ENCODE measurements at regions of chr21 and their contacts with region 1.

Region 1: DNA sequence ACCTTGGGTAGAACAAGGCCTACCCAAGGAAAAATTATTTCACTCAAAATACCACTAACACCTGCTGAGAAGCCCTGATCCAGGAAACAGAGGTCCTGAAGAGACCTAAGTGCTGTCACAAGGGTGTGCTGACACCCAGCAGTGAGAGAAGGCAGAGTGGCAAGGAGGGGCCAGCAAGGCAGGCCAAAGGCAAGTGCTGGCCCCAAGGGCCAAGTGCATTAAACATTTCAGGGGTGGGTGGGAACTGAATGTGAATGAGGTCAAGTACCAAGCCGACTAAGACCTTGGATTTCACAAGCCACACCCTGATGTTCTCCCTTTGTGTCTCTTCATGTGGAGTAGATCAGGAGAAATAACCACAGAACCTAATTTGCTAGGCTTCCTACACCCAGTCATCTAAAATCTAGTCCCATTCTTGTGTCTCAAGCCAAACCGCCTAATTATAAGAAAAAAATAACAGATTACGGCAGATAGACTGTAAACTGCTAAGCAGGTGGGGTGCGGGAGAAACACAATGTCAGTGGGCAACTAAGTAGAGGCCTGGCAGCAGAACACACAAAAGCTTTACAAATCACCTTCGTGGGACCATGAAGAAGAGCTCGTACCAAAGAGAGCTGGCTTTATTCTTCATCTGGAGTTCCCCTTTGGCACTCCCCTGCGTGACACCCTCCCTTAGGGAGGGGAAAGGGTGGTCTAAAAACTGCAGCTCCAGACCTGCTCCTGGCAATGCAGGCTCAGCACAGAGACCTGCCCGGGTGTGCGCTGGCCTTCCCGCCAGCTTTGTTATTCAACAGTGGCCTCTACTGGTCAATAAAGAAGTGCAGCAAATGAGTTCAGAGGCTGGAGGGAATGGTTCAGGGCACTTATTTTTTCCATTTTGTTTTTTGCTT is 8.7 kb downstream of the UBE2G2 start:
- DNase-seq: peak; percentile 40 to 45
- ATAC-seq: peak; percentile 86 to 93 (median 90)
- H3K4me3 ChIP-seq: no peak overlapping the region
- H3K27ac ChIP-seq: no peak overlapping the region
- H3K4me1 ChIP-seq: peaks cover 5 to 22% (median 12%) of the 10 kb centered on the region in 9 donors
- H3K27me3 ChIP-seq: no peaks in the 10 kb centered on the region
- CTCF ChIP-seq: peak; percentile 66 to 91 (median 82)

Region 2: GRCh38 chr21:44510508-44511210 is 282.3 kb before region 1 on chr21:
- intact Hi-C with region 1: loop called in 6 of 10 experiments (anchors 5 to 10 kb)
- DNase-seq: peak; percentile 23 to 60
- ATAC-seq: peak; percentile 14 to 80 (median 65)
- H3K4me3 ChIP-seq: peak overlapping the region in 2 of 10 donors; percentile 10 to 23
- H3K27ac ChIP-seq: no peak overlapping the region
- H3K4me1 ChIP-seq: peaks cover 0 to 10% (median 6%) of the 10 kb centered on the region in 9 donors
- H3K27me3 ChIP-seq: peaks cover 0 to 47% (median 17%) of the 10 kb centered on the region in 7 donors
- CTCF ChIP-seq: peak; percentile 45 to 87 (median 74)

Region 3: GRCh38 chr21:44517175-44517899 is 275.6 kb before region 1 on chr21:
- intact Hi-C with region 1: loop called in 5 of 10 experiments (anchors 5 to 10 kb)
- DNase-seq: no peak
- ATAC-seq: no peak
- H3K4me3 ChIP-seq: no peak overlapping the region
- H3K27ac ChIP-seq: no peak overlapping the region
- H3K4me1 ChIP-seq: no peaks in the 10 kb centered on the region
- H3K27me3 ChIP-seq: peaks cover 0 to 27% (median 8%) of the 10 kb centered on the region in 7 donors
- CTCF ChIP-seq: no peak

Region 4: GRCh38 chr21:44574444-44575306 is 218.3 kb before region 1 on chr21:
- intact Hi-C with region 1: no loop called
- DNase-seq: no peak
- ATAC-seq: no peak
- H3K4me3 ChIP-seq: no peak overlapping the region
- H3K27ac ChIP-seq: no peak overlapping the region
- H3K4me1 ChIP-seq: no peaks in the 10 kb centered on the region
- H3K27me3 ChIP-seq: peaks cover 0 to 27% (median 0%) of the 10 kb centered on the region in 7 donors
- CTCF ChIP-seq: no peak

Region 5: GRCh38 chr21:44723177-44724131 is 69.5 kb before region 1 on chr21:
- intact Hi-C with region 1: no loop called
- DNase-seq: no peak
- ATAC-seq: peak in 1 of 8 donors; percentile 40
- H3K4me3 ChIP-seq: peak overlapping the region in 2 of 10 donors; percentile 12 to 14
- H3K27ac ChIP-seq: no peak overlapping the region
- H3K4me1 ChIP-seq: peaks cover 0 to 9% (median 0%) of the 10 kb centered on the region in 9 donors
- H3K27me3 ChIP-seq: peaks cover 0 to 88% (median 65%) of the 10 kb centered on the region in 7 donors
- CTCF ChIP-seq: no peak

Region 6: GRCh38 chr21:44742418-44743153 is 50.4 kb before region 1 on chr21:
- intact Hi-C with region 1: no loop called
- DNase-seq: no peak
- ATAC-seq: no peak
- H3K4me3 ChIP-seq: no peak overlapping the region
- H3K27ac ChIP-seq: no peak overlapping the region
- H3K4me1 ChIP-seq: no peaks in the 10 kb centered on the region
- H3K27me3 ChIP-seq: no peaks in the 10 kb centered on the region
- CTCF ChIP-seq: peak in 7 of 9 donors; percentile 6 to 52 (median 32)

Region 7: GRCh38 chr21:44836666-44837471 is 43.9 kb after region 1 on chr21:
- intact Hi-C with region 1: no loop called
- DNase-seq: peak in 1 of 2 donors; percentile 41
- ATAC-seq: peak in 6 of 8 donors; percentile 24 to 83 (median 64)
- H3K4me3 ChIP-seq: no peak overlapping the region
- H3K27ac ChIP-seq: no peak overlapping the region
- H3K4me1 ChIP-seq: peaks cover 0 to 10% (median 5%) of the 10 kb centered on the region in 9 donors
- H3K27me3 ChIP-seq: no peaks in the 10 kb centered on the region
- CTCF ChIP-seq: no peak

Region 8: GRCh38 chr21:44932408-44933181 is 139.6 kb after region 1 on chr21:
- intact Hi-C with region 1: loop called in 1 of 10 experiments (anchors 5 kb)
- DNase-seq: peak in 1 of 2 donors; percentile 65
- ATAC-seq: peak; percentile 34 to 72 (median 54)
- H3K4me3 ChIP-seq: peak overlapping the region; percentile 23 to 60 (median 46)
- H3K27ac ChIP-seq: peak overlapping the region in 3 of 10 donors; percentile 15 to 96 (median 26)
- H3K4me1 ChIP-seq: peaks cover 12 to 55% (median 25%) of the 10 kb centered on the region in 9 donors
- H3K27me3 ChIP-seq: peaks cover 13 to 71% (median 40%) of the 10 kb centered on the region in 7 donors
- CTCF ChIP-seq: peak; percentile 36 to 76 (median 62)

Measured in heart right ventricle (tissue), 16 donors.